ENCODE measurements at regions of chr3 and their contacts with region 1.

Region 1: GRCh38 chr3:195160257-195160898 is 110.6 kb downstream of the XXYLT1 start:
- DNase-seq: no peak
- ATAC-seq: peak; percentile 12; the same call in 1 of the 3 replicates
- H3K4me3 ChIP-seq: no peak overlapping the region
- H3K27ac ChIP-seq: peak overlapping the region; percentile 48; the same call in 2 of the 3 replicates
- H3K4me1 ChIP-seq: peaks cover 39 to 60% of the 10 kb centered on the region in 2 experiments
- H3K27me3 ChIP-seq: no peaks in the 10 kb centered on the region; a peak in 1 of 5 replicates
- CTCF ChIP-seq: no peak
- EP300 ChIP-seq: no peak; the same call in 1 of the 2 replicates
- POLR2A ChIP-seq: no peak
- RAD21 ChIP-seq: no peak

Region 2: GRCh38 chr3:195007151-195007550 is 153.2 kb before region 1 on chr3:
- CTCF ChIA-PET with region 1: no interaction called
- POLR2A ChIA-PET with region 1: no interaction called
- in situ Hi-C with region 1: no loop called
- intact Hi-C with region 1: no loop called
- DNase-seq: no peak
- ATAC-seq: no peak
- H3K4me3 ChIP-seq: no peak overlapping the region
- H3K27ac ChIP-seq: no peak overlapping the region
- H3K4me1 ChIP-seq: peaks cover 0 to 13% of the 10 kb centered on the region in 2 experiments; a peak in 3 of 5 replicates
- H3K27me3 ChIP-seq: peaks cover 24 to 65% of the 10 kb centered on the region in 2 experiments
- CTCF ChIP-seq: no peak
- EP300 ChIP-seq: no peak
- POLR2A ChIP-seq: no peak
- RAD21 ChIP-seq: no peak

Region 3: DNA sequence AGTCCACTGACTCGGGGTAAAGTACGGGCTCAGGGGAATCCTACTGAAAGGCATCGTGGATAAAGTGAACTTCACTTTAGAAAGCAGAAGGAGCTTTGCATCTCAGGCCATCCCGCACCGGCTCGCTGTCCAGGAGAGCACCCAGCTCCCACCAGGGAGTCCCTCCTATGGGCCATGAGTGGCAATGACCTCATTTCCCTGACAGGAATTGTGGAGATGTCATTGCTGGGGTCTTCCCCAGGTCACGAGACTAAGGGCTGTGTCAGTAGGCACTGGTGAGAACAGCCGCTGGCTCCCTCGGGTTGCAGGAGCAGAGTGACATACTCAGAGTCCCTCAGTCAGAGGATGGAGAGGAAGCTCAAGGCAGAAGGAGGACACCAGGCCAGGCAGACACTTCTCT is 13.3 kb after region 1 on chr3:
- CTCF ChIA-PET with region 1: no interaction called
- POLR2A ChIA-PET with region 1: interaction called, 10 read pairs
- in situ Hi-C with region 1: no loop called
- intact Hi-C with region 1: no loop called
- DNase-seq: no peak
- ATAC-seq: no peak
- H3K4me3 ChIP-seq: no peak overlapping the region
- H3K27ac ChIP-seq: no peak overlapping the region
- H3K4me1 ChIP-seq: peaks cover 26 to 32% of the 10 kb centered on the region in 2 experiments
- H3K27me3 ChIP-seq: no peaks in the 10 kb centered on the region
- CTCF ChIP-seq: no peak
- EP300 ChIP-seq: no peak
- POLR2A ChIP-seq: no peak
- RAD21 ChIP-seq: no peak